Left ventricle myocardium inferior (tissue), 1 donor: ENCODE measurements at regions of chr12 and their contacts with region 1.

Region 1: DNA sequence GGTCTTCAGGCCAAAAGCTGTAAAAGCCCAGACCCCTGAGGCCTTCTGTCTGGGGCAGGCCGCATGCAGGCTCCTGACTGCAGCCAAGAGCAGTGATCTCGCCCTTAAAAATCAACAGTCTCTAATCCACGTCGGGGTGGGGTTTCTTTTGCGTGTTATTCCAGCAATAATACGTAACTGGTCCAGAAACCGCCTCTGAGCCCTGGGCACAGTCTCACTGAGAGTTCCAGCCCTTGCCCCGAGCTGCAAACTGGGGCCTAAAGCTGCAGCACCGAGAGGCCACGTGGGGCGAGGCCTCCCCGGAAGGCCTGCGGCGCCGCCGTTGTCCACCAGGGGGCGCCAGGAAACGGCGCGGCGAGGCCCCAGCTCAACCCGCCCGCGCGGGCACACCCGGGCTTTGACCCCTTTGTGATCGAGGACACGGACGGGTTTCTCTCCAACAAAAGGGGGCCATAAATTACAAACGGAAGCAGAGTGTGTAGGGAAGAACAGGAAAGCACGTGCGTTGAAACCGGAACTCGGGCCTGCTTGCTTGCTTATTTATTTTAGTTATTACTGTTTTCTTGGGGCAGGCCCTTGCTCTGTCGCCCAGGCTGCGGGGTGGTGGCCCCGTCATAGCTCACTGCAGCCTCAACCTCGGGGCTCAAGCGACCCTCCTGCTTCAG is 87.2 kb downstream of the NINJ2 start:
- DNase-seq: peak; percentile 84
- H3K4me3 ChIP-seq: peak overlapping the region; percentile 19
- H3K27ac ChIP-seq: peak overlapping the region; percentile 97
- H3K4me1 ChIP-seq: peaks cover 92% of the 10 kb centered on the region
- H3K27me3 ChIP-seq: no peaks in the 10 kb centered on the region
- CTCF ChIP-seq: peak; percentile 99

Region 2: DNA sequence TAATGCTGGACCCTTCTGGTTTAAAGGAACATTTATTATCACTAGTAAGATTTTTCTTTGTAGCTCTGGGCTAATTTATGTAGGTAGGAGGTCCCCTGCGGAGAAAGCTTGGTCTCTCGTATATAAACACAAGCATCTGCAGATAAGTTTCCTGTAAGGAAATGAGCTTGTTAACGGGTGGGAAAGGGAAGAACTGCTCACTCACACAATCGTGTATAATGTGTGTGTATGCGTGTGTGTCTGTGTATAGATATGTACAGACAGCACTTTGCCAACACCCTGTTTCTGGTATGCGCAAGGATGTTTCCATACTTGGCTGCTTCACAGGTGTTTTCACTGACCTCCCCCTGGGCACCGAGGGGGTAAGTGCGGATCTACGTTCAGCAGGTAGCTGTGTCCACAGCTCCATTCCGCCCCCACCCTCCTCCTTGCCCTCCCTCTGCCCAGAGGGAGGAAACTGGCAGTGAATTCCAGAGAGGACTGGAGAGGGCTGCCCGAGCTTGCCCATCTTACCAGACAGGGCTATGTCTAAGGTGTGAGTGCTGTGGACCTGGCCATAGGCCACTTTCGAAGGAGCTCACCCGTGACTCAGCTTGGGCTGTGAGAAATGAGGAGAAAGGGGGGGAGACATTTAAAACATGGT is 22.0 kb after region 1 on chr12:
- intact Hi-C with region 1: no loop called
- DNase-seq: no peak
- H3K4me3 ChIP-seq: no peak overlapping the region
- H3K27ac ChIP-seq: no peak overlapping the region
- H3K4me1 ChIP-seq: peaks cover 26% of the 10 kb centered on the region
- H3K27me3 ChIP-seq: no peaks in the 10 kb centered on the region
- CTCF ChIP-seq: no peak

Region 3: GRCh38 chr12:818733-819132 is 242.7 kb after region 1 on chr12:
- intact Hi-C with region 1: loop called (anchors 5 kb)
- DNase-seq: no peak
- H3K4me3 ChIP-seq: no peak overlapping the region
- H3K27ac ChIP-seq: peak overlapping the region; percentile 42
- H3K4me1 ChIP-seq: peaks cover 63% of the 10 kb centered on the region
- H3K27me3 ChIP-seq: no peaks in the 10 kb centered on the region
- CTCF ChIP-seq: peak; percentile 24